ENCODE measurements at regions of chr14 and their contacts with region 1.

Region 1: GRCh38 chr14:53539489-53540126 is 386.5 kb upstream of the DDHD1 start:
- DNase-seq: peak; percentile 63 to 77
- ATAC-seq: peak; percentile 58 to 85 (median 76)
- H3K4me3 ChIP-seq: no peak overlapping the region
- H3K27ac ChIP-seq: no peak overlapping the region
- H3K4me1 ChIP-seq: no peaks in the 10 kb centered on the region
- H3K27me3 ChIP-seq: no peaks in the 10 kb centered on the region
- CTCF ChIP-seq: peak; percentile 77

Region 2: GRCh38 chr14:53696217-53696965 is 156.8 kb after region 1 on chr14:
- intact Hi-C with region 1: no loop called
- DNase-seq: no peak
- ATAC-seq: no peak
- H3K4me3 ChIP-seq: no peak overlapping the region
- H3K27ac ChIP-seq: no peak overlapping the region
- H3K4me1 ChIP-seq: no peaks in the 10 kb centered on the region
- H3K27me3 ChIP-seq: no peaks in the 10 kb centered on the region
- CTCF ChIP-seq: no peak

Region 3: GRCh38 chr14:53953002-53953827 is 413.6 kb after region 1 on chr14:
- intact Hi-C with region 1: loop called in 1 of 2 experiments (anchors 5 kb)
- DNase-seq: peak; percentile 88 to 91
- ATAC-seq: peak; percentile 78 to 84 (median 78)
- H3K4me3 ChIP-seq: peak overlapping the region; percentile 70
- H3K27ac ChIP-seq: peak overlapping the region; percentile 70
- H3K4me1 ChIP-seq: peaks cover 17% of the 10 kb centered on the region
- H3K27me3 ChIP-seq: peaks cover 0 to 80% (median 12%) of the 10 kb centered on the region in 3 donors
- CTCF ChIP-seq: no peak

Region 4: DNA sequence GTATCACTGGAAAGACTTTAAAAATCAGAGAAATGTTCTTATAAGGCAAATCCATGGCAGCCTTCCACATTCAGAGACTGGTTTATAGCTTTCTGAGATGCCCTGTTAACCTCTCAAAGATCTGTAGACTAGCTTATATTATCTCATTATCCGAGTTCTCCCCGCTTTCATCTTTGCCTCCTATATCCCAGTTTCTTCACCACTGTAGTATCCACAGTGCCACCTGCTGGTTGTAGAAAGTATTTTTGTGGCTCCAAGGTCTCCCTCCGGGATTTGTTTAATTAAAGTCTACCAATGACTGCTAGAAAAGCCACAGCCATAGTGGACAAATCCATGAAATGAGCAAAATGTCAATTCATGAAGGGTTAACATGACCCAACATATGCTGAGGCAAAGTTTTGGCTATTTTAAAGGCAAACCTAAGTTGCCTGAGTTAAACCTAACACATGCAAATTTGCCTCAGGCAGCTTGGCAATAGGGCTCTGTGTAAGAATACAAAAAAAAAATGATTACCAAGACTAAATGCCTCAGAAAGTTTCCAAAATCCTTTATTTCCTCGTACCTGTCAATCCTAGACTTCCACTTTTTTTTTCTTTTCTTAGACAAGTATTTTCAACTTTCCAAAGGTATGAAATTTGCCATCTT is 635.8 kb after region 1 on chr14:
- intact Hi-C with region 1: loop called (anchors 2 to 5 kb)
- DNase-seq: no peak
- ATAC-seq: peak in 3 of 4 donors; percentile 48 to 65 (median 49)
- H3K4me3 ChIP-seq: no peak overlapping the region
- H3K27ac ChIP-seq: no peak overlapping the region
- H3K4me1 ChIP-seq: no peaks in the 10 kb centered on the region
- H3K27me3 ChIP-seq: no peaks in the 10 kb centered on the region
- CTCF ChIP-seq: peak; percentile 84

Region 5: GRCh38 chr14:54347997-54348611 is 808.5 kb after region 1 on chr14:
- intact Hi-C with region 1: loop called in 1 of 2 experiments (anchors 5 kb)
- DNase-seq: no peak
- ATAC-seq: peak in 2 of 4 donors; percentile 56 to 72
- H3K4me3 ChIP-seq: no peak overlapping the region
- H3K27ac ChIP-seq: no peak overlapping the region
- H3K4me1 ChIP-seq: peaks cover 3% of the 10 kb centered on the region
- H3K27me3 ChIP-seq: peaks cover 0 to 25% (median 0%) of the 10 kb centered on the region in 3 donors
- CTCF ChIP-seq: peak; percentile 58

Measured in psoas muscle (tissue), 8 donors.